Activated CD4-positive, alpha-beta memory T cell treated with anti-CD3 and anti-CD28 coated beads for 36 hours (primary cell): ENCODE measurements at regions of chr2 and their contacts with region 1.

Region 1: GRCh38 chr2:233854241-233854981 is at the start of gene HJURP:
- DNase-seq: peak; percentile 97
- H3K4me3 Mint-ChIP-seq: peak within 1 kb of the TSS; percentile 92
- H3K27ac Mint-ChIP-seq: peak within 1 kb of the TSS; percentile 94
- H3K4me1 Mint-ChIP-seq: peaks cover 19% of the 10 kb centered on the region
- H3K27me3 Mint-ChIP-seq: peaks cover 1% of the 10 kb centered on the region
- total RNA-seq, gene HJURP: 98.4 to 102 TPM

Region 2: DNA sequence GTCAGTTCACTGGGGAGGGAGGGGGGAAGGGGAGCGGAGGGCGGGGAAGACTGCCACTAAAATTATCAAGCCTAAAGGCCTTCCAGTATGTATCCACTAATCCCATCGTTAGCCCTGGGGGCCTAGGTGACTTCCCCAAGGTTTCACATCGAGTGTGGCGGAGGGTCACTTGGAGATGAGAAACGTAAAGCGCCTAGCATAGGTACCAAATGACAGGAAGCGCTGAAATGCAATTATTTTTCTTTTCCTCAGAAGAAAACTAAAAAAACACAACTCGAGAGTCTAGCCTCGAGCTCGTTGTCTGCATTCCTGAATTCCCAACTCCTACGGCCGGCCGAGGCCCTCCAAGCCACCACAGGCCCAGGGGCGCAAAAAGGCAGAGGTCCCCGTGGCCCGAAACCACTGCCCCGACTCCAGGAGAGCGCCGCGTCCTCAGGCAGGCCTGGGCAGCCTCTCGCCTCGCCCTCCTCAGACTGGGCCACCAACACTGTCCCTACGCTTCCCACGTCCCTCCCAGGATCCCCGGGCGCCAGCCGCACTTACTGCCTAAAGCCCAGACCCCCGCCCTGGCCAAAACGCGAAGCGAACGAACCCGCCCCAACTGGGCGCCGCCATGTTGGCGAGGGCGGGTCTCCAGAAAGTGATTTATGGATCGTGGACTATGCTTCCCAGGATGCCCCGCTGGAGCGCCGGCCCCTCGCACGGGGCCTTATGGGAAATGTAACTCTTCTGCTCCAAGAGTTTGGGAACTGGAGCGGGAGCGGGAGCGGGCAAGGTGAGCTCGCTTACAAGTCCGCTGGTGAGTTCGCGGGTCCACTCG is 288.1 kb before region 1 on chr2 and contains the start of gene USP40:
- CTCF ChIA-PET with region 1: interaction called, 4 read pairs
- POLR2A ChIA-PET with region 1: no interaction called
- intact Hi-C with region 1: loop called (anchors 10 kb)
- DNase-seq: peak; percentile 72
- H3K4me3 Mint-ChIP-seq: peak within 1 kb of the TSS; percentile 98
- H3K27ac Mint-ChIP-seq: peak within 1 kb of the TSS; percentile 91
- H3K4me1 Mint-ChIP-seq: peaks cover 13% of the 10 kb centered on the region
- H3K27me3 Mint-ChIP-seq: no peaks in the 10 kb centered on the region
- total RNA-seq, gene USP40: 19.3 to 21.5 TPM

Region 3: DNA sequence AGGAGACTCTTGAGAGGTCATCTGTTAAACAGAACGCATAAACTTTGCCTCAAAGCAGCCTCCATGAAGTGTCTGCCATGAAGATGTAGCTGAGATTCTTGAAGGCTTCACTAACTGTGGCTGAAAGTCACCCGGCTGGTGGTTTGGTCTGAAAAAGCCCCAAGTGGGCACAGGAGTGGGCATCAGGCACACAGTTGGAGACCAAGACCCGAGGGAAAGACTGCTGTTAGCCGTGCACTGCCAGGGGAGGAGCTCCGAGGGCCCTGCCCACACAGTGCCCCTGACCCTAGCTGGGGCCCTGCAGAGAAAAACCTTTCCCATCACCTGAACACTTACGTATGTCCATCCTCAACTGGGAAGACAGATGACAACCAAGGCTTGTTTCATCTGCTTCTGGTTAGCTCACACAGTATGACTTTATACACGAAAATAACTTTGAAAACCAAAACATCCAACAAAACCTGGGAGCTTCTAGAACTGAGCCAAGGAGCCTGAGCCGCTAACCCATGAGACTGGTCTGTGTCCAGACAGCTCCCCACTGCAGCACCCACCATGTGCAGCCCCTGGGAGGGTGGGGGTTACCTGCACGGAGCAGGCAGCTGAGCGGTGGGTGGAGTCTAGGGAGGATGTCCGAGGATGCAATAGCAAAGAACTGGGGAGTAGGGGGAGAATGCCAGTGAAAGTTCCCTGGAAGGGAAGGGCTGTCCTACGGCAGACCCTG is 15.5 kb before region 1 on chr2:
- CTCF ChIA-PET with region 1: interaction called, 26 read pairs
- POLR2A ChIA-PET with region 1: no interaction called
- intact Hi-C with region 1: no loop called
- DNase-seq: no peak
- H3K4me3 Mint-ChIP-seq: no peak overlapping the region
- H3K27ac Mint-ChIP-seq: no peak overlapping the region
- H3K4me1 Mint-ChIP-seq: peaks cover 10% of the 10 kb centered on the region
- H3K27me3 Mint-ChIP-seq: no peaks in the 10 kb centered on the region

Region 4: DNA sequence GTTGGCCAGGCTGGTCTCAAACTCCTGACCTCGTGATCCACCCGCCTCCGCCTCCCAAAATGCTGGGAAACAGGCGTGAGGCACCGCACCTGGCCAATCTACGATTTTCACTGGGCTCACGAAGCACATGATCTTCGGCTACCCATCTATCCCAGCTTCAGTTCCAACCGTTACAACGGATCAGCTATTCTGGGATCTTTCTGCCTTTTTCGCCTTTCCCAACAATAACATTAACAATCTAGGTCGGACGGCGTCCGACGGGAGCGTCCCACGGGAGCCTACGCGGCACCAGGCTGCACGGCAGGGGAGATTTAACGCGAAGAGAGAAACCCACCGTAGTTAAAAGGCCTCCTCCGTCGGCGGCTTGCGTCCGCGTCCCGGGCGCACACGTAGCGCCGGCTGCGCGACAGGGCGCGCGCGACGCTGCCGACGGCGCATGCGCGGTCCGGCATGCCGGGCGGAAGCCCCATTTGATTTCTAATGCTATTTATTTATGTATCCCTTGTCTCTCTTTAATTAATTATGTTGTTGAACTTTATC is 13.7 kb after region 1 on chr2 and contains the start of gene MSL3B:
- CTCF ChIA-PET with region 1: interaction called, 16 read pairs
- POLR2A ChIA-PET with region 1: interaction called, 5 read pairs
- intact Hi-C with region 1: loop called (anchors 1 kb)
- DNase-seq: peak; percentile 61
- H3K4me3 Mint-ChIP-seq: peak within 1 kb of the TSS; percentile 87
- H3K27ac Mint-ChIP-seq: peak within 1 kb of the TSS; percentile 60
- H3K4me1 Mint-ChIP-seq: peaks cover 4% of the 10 kb centered on the region
- H3K27me3 Mint-ChIP-seq: peaks cover 20% of the 10 kb centered on the region